ENCODE measurements at regions of chr4 and their contacts with region 1.

Region 1: DNA sequence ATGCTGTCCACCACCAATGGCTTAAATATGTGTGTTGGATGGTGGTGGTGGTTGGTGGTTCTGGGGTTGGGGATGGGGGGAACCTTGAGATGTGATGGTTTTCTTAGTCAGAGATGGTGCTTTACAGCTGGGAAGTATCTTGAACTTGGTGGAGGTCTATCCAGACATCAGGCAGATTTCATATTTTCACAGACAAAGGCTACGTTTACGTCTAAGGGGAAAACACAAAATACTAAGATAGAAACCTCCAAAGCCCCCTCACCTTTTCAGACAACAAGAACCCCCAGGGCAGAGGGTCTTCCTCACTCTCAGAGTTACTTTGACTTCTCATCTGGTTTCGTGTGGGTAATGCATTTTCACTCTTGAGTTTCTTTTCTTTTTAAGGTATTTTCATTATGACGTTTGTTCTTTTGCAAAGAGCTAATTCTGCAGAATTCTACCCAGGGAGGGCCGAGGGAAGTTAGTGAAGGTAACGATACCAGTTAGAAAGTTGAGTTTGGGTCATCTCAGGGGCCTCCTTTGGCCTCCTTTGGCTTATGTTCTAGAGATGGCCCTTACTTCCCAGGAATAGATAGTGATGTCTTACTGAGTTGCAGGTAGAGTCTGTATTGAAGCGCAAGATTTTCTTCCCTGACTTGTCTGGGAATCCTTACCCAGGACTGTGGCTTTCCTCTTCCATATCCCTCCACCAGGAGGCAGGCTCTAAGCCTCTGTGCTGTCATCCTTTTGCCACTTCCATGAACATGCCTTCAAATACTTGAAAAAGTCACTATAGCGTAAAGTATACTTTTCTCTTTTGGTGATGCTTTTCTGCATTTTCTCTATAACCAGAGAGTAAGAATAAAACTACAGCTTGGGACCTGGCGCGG is 31.9 kb downstream of the RHOH start:
- DNase-seq: peak; percentile 62
- ATAC-seq: peak; percentile 5
- H3K4me3 Mint-ChIP-seq: peak overlapping the region; percentile 58
- H3K27ac Mint-ChIP-seq: peak overlapping the region; percentile 93
- H3K4me1 Mint-ChIP-seq: peaks cover 95% of the 10 kb centered on the region
- H3K27me3 Mint-ChIP-seq: no peaks in the 10 kb centered on the region

Region 2: GRCh38 chr4:40173470-40173875 is 55.3 kb before region 1 on chr4:
- CTCF ChIA-PET with region 1: no interaction called
- DNase-seq: no peak
- ATAC-seq: peak; percentile 68
- H3K4me3 Mint-ChIP-seq: no peak overlapping the region
- H3K27ac Mint-ChIP-seq: peak overlapping the region; percentile 54
- H3K4me1 Mint-ChIP-seq: peaks cover 16% of the 10 kb centered on the region
- H3K27me3 Mint-ChIP-seq: no peaks in the 10 kb centered on the region

Region 3: DNA sequence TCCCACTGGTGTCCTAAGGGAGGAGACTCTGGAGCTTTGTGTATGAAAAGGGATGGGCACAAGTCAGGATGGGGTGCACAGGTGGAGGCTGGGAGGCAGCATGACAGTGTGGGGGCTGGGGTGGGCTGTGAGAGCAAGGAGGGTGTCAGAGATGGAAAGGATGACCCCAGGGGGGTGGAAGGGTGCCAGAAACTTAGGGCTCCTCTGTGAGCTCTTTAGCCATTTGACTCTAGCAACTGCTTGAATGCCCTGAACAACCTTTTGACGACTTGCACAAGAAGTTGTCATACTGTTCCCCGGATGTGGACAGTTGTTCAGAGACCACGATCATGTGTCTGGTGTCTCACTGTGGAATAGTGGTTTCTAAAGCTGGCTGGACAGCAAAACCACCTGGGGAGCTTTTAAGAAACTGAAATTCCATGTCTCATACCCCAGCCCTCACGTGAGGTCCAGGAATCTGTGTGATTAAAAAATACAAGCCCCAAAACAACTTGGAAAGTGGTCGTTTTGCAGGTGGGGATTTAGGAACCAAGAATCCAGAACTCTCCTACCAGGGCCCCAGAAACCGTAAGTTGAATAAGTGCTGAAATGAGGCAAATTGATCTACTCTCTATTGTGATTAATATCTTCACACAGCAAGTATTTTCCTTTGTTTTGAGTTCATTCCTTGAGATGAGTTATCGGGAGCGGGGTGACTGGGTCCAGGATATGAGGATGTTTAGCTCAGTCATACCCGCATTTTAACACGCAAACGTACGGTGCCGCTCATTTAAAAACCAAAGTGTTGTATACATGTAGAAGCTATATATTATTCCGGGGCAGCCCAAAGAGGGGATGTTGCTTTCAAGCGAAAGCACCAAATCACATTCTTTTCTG is 28.5 kb before region 1 on chr4:
- CTCF ChIA-PET with region 1: interaction called, 13 read pairs
- DNase-seq: peak; percentile 94
- ATAC-seq: peak; percentile 52
- H3K4me3 Mint-ChIP-seq: peak overlapping the region; percentile 98
- H3K27ac Mint-ChIP-seq: peak overlapping the region; percentile 99
- H3K4me1 Mint-ChIP-seq: peaks cover 51% of the 10 kb centered on the region
- H3K27me3 Mint-ChIP-seq: no peaks in the 10 kb centered on the region

Region 4: GRCh38 chr4:40205259-40206198 is 23.2 kb before region 1 on chr4:
- CTCF ChIA-PET with region 1: interaction called, 22 read pairs
- DNase-seq: peak; percentile 80
- ATAC-seq: peak; percentile 50
- H3K4me3 Mint-ChIP-seq: peak overlapping the region; percentile 98
- H3K27ac Mint-ChIP-seq: peak overlapping the region; percentile 99
- H3K4me1 Mint-ChIP-seq: peaks cover 62% of the 10 kb centered on the region
- H3K27me3 Mint-ChIP-seq: no peaks in the 10 kb centered on the region